Ovary (tissue), 10 donors: ENCODE measurements at regions of chr4 and their contacts with region 1.

Region 1: DNA sequence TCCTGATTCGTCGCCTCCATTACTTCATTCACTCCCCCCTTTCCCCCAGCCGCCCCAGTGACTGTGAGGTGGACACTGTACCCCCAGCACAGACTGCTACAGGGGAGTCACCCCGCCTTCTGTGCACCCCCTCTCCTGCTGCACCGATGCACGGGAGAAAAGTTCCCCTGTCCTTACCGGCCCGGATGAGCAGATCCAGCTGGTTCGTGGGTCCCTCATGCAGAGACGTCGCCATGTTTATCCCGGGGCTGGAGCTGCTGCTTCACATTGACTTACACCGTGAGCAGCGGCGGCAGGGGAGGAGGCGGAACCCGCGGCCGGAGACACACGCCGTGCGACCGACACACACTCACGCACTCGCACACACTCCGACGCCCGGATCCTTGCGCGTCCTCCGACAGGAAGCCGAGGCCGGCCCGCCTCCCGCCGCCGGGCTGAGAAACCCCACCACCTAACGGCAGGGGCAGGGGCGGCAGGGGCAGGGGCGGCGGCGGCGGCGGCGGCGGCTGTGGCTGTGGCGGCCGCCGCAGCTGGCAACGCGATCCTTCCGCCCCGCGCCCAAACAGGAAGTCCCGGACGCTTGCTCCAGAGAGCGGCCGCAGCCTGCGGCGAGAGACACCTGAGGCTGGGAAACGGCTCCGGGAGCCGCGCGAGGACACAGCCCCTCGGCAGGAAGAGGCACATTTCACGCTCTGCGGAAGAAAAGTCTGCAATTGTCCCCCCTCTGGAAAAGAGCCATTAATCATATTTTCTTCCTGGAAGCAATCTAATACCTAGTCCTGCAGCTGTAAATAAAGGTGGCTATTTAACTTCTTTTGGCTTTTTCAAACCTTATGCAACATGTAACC is 68.6 kb downstream of the NOCT start:
- DNase-seq: peak; percentile 83 to 93 (median 88)
- H3K4me3 ChIP-seq: peak overlapping the region; percentile 76
- H3K27ac ChIP-seq: peak overlapping the region; percentile 88 to 92
- H3K4me1 ChIP-seq: no peaks in the 10 kb centered on the region
- H3K27me3 ChIP-seq: no peaks in the 10 kb centered on the region
- CTCF ChIP-seq: peak in 2 of 3 donors; percentile 28 to 51
- EP300 ChIP-seq: no peak
- POLR2A ChIP-seq: no peak

Region 2: DNA sequence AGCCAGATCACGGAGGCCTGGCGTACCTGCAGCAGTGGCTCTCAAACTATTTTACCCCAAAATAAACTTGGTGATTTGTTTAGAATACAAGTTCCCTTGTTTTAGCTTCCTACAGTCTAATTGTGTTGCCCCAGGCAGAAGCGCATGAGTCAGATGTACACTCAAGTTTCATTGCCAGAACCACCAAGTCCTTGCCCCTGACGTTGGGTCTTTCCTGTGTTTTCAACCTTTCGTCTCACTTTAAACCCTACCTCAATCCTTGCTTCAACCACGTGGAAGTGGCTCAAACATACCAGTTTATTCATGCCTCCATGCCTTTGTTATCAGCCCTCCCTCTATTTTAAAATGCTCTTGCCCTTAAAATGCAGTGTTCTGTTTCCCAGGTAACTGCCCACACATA is 775.8 kb before region 1 on chr4:
- intact Hi-C with region 1: no loop called
- DNase-seq: no peak
- H3K4me3 ChIP-seq: no peak overlapping the region
- H3K27ac ChIP-seq: no peak overlapping the region
- H3K4me1 ChIP-seq: no peaks in the 10 kb centered on the region
- H3K27me3 ChIP-seq: no peaks in the 10 kb centered on the region
- CTCF ChIP-seq: no peak
- EP300 ChIP-seq: no peak
- POLR2A ChIP-seq: no peak

Region 3: GRCh38 chr4:139030614-139031235 is 53.5 kb before region 1 on chr4:
- intact Hi-C with region 1: loop called in 1 of 4 experiments (anchors 10 kb)
- DNase-seq: peak; percentile 64 to 81 (median 68)
- H3K4me3 ChIP-seq: no peak overlapping the region
- H3K27ac ChIP-seq: no peak overlapping the region
- H3K4me1 ChIP-seq: no peaks in the 10 kb centered on the region
- H3K27me3 ChIP-seq: no peaks in the 10 kb centered on the region
- CTCF ChIP-seq: peak; percentile 56 to 78 (median 77)
- EP300 ChIP-seq: no peak
- POLR2A ChIP-seq: no peak

Region 4: GRCh38 chr4:139177868-139178611 is 93.9 kb after region 1 on chr4:
- intact Hi-C with region 1: loop called in 1 of 4 experiments (anchors 5 kb)
- DNase-seq: peak; percentile 91 to 95 (median 94)
- H3K4me3 ChIP-seq: peak overlapping the region; percentile 82
- H3K27ac ChIP-seq: peak overlapping the region; percentile 99 to 100
- H3K4me1 ChIP-seq: no peaks in the 10 kb centered on the region
- H3K27me3 ChIP-seq: no peaks in the 10 kb centered on the region
- CTCF ChIP-seq: no peak
- EP300 ChIP-seq: peak; percentile 84
- POLR2A ChIP-seq: peak; percentile 75

Region 5: DNA sequence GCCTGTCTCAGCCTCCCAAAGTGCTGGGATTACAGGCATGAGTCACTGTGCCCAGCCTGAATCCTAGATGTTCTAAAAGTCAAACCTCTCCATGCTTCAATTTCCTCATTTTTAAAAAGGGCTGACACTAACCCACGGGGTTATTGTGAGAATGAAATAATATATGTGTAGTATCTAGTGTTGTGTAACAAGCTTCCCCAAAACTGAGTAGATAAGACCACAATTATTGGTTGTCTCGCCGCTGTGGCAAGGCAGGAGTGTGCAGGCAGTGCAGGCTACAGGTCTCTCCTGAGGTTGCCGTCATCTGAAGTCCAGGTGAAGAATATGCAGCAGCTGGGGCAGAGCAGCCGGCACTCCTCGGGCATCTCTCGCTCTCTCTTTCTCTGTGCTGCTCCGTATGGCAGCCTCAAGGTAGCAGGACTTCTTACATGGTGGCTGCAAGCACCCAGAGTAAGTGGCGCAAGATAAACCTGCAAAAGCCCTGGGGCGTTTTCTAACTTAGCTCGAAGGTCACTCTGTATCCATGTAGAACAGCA is 400.7 kb after region 1 on chr4:
- intact Hi-C with region 1: no loop called
- DNase-seq: no peak
- H3K4me3 ChIP-seq: no peak overlapping the region
- H3K27ac ChIP-seq: no peak overlapping the region
- H3K4me1 ChIP-seq: no peaks in the 10 kb centered on the region
- H3K27me3 ChIP-seq: no peaks in the 10 kb centered on the region
- CTCF ChIP-seq: no peak
- EP300 ChIP-seq: no peak
- POLR2A ChIP-seq: no peak